SK-N-SH (cell line): ENCODE measurements at regions of chr2 and their contacts with region 1.

Region 1: GRCh38 chr2:9799665-9800632 is 43.3 kb upstream of the TAF1B start:
- DNase-seq: peak; percentile 98
- H3K4me3 ChIP-seq: no peak overlapping the region; a peak in 1 of 4 replicates
- H3K27ac ChIP-seq: no peak overlapping the region
- H3K4me1 ChIP-seq: peaks cover 8 to 15% of the 10 kb centered on the region in 2 experiments; a peak in 3 of 4 replicates
- H3K27me3 ChIP-seq: no peaks in the 10 kb centered on the region
- CTCF ChIP-seq: peak; percentile 99
- EP300 ChIP-seq: no peak
- RAD21 ChIP-seq: peak; percentile 96

Region 2: GRCh38 chr2:9770308-9771100 is 29.4 kb before region 1 on chr2:
- CTCF ChIA-PET with region 1: interaction called, 44 read pairs
- POLR2A ChIA-PET with region 1: interaction called, 3 read pairs
- DNase-seq: peak; percentile 79
- H3K4me3 ChIP-seq: no peak overlapping the region
- H3K27ac ChIP-seq: peak overlapping the region in 1 of 2 experiments; percentile 28; a peak in 1 of 4 replicates
- H3K4me1 ChIP-seq: peaks cover 5 to 32% of the 10 kb centered on the region in 2 experiments; a peak in 2 of 4 replicates
- H3K27me3 ChIP-seq: no peaks in the 10 kb centered on the region
- CTCF ChIP-seq: peak; percentile 73
- EP300 ChIP-seq: no peak
- RAD21 ChIP-seq: peak; percentile 57

Region 3: GRCh38 chr2:9830690-9831410 is 30.9 kb after region 1 on chr2:
- CTCF ChIA-PET with region 1: interaction called, 13 read pairs
- POLR2A ChIA-PET with region 1: no interaction called
- DNase-seq: no peak
- H3K4me3 ChIP-seq: no peak overlapping the region
- H3K27ac ChIP-seq: no peak overlapping the region
- H3K4me1 ChIP-seq: peaks cover 0 to 2% of the 10 kb centered on the region in 2 experiments; a peak in 1 of 4 replicates
- H3K27me3 ChIP-seq: no peaks in the 10 kb centered on the region; the same call in 1 of the 2 replicates
- CTCF ChIP-seq: no peak
- EP300 ChIP-seq: no peak
- RAD21 ChIP-seq: no peak

Region 4: GRCh38 chr2:9941196-9941995 is 141.4 kb after region 1 on chr2:
- CTCF ChIA-PET with region 1: interaction called, 19 read pairs
- POLR2A ChIA-PET with region 1: no interaction called
- DNase-seq: no peak
- H3K4me3 ChIP-seq: no peak overlapping the region
- H3K27ac ChIP-seq: peak overlapping the region in 1 of 2 experiments; percentile 4; a peak in 1 of 4 replicates
- H3K4me1 ChIP-seq: peaks cover 7 to 11% of the 10 kb centered on the region in 2 experiments; a peak in 3 of 4 replicates
- H3K27me3 ChIP-seq: no peaks in the 10 kb centered on the region
- CTCF ChIP-seq: no peak
- EP300 ChIP-seq: no peak
- RAD21 ChIP-seq: no peak

Region 5: DNA sequence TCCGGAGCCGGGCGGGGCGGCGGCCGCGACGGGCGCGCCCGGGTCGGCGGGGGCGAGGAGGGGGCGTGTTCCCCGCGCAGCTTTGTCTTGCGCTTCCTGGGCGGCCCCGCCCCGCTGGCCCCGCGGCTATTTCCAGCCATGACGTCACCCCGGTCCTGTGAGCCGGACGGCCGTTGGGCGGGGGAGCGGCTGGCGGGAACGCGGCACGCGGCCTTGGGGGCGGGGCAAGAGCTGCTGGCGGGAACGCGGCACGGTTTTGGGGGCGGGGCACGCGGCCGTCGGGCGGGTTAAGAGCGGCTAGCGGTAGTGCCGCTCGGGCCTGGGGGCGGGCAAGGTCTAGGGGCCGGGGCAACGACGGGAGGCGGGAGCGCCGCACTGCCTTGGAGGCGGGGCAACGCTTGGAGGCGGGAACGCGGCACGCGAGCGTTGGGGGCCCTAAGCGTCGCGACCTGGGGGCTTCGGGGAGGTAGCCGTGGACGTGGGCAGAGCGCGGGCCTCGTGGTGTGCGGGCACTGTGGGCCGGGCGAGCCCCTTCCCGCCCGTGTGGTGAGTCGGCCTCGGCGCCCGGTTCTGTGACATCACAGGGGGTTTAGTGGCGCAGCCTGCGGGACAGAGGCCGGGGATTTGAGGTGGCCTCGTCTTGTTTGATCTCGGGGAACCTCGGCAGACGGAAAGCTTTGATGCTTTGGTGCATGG is 244.1 kb after region 1 on chr2:
- CTCF ChIA-PET with region 1: interaction called, 185 read pairs
- POLR2A ChIA-PET with region 1: interaction called, 4 read pairs
- DNase-seq: peak; percentile 98
- H3K4me3 ChIP-seq: peak overlapping the region; percentile 59 to 68
- H3K27ac ChIP-seq: peak overlapping the region; percentile 58 to 77; a peak in 2 of 4 replicates
- H3K4me1 ChIP-seq: peaks cover 6 to 22% of the 10 kb centered on the region in 2 experiments; a peak in 1 of 4 replicates
- H3K27me3 ChIP-seq: no peaks in the 10 kb centered on the region
- CTCF ChIP-seq: no peak
- EP300 ChIP-seq: no peak
- RAD21 ChIP-seq: no peak

Region 6: DNA sequence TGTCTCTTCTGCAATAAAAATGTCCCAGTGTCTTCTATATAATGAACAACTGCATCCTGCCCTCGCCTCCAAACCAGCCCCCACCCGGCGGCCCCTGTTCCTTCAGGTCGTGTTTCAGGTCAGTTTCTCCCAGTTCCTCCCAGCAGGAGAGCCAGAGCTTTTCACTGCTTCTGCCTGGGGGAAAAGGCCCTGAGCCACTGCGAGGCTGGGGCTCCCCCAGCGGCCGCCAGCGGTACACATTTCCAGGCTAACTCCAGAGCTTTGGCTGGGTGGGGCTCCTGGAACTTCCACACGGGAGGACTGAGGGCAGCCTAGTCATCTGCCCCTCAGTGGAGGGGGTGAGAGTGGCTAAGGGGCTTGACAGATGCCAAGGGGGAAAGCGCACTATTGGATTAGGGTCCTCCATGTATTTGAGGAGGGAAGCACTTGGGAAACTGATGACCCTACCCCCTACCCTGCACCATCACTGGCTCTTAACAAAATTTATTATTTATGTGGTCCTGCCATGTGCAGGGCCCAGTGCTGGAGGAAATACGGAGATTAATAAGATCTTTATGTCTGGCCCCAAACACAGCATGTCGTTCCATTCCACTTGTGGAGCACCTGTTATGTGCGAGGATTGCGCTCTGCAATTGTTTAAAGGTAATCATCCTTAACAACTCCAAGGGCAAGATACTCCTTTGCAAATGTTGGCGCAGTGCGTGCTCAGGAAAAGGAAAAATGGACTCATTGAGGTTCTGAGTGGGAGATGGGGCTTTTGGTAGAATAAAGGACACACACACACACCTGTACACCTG is 297.6 kb after region 1 on chr2:
- CTCF ChIA-PET with region 1: interaction called, 11 read pairs
- POLR2A ChIA-PET with region 1: interaction called, 5 read pairs
- DNase-seq: peak; percentile 91
- H3K4me3 ChIP-seq: no peak overlapping the region
- H3K27ac ChIP-seq: no peak overlapping the region
- H3K4me1 ChIP-seq: peaks cover 0 to 13% of the 10 kb centered on the region in 2 experiments; a peak in 1 of 4 replicates
- H3K27me3 ChIP-seq: no peaks in the 10 kb centered on the region
- CTCF ChIP-seq: peak; percentile 96
- EP300 ChIP-seq: no peak
- RAD21 ChIP-seq: peak; percentile 83